Endothelial cell of umbilical vein (primary cell): ENCODE measurements at regions of chr9 and their contacts with region 1.

Region 1: GRCh38 chr9:88991066-88992034 is at the start of gene S1PR3:
- DNase-seq: peak; percentile 45
- H3K4me3 ChIP-seq: peak within 1 kb of the TSS; percentile 52 to 99 (median 96)
- H3K27ac ChIP-seq: peak within 1 kb of the TSS; percentile 58
- H3K4me1 ChIP-seq: peaks cover 37% of the 10 kb centered on the region
- H3K27me3 ChIP-seq: no peaks in the 10 kb centered on the region
- CTCF ChIP-seq: peak; percentile 5 to 9
- POLR2A ChIP-seq: peak; percentile 41
- total RNA-seq, gene S1PR3: 18.9 and 25.8 TPM in 2 replicates

Region 2: DNA sequence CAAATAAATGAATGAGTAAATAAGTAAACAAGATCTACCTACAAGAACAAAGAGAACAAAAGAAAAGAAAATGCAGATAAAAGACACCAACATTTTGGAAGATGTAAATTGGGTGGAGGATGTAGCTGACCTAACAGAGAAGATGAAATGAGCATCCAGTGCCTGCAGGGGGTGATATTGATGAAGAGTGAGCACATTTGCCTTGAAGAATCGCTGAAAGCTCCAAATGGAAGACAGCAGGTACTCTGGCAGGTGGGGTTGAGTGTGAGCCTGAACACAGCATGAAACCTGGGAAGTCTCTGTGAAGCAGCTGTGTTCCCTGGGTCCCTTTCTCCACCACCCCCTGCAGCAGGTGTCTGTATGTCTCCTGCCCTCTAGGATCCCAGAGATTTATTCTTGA is 330.7 kb before region 1 on chr9:
- CTCF ChIA-PET with region 1: interaction called, 24 read pairs
- POLR2A ChIA-PET with region 1: no interaction called
- dilution Hi-C with region 1: no loop called
- intact Hi-C with region 1: no loop called
- DNase-seq: peak; percentile 46
- H3K4me3 ChIP-seq: no peak overlapping the region
- H3K27ac ChIP-seq: no peak overlapping the region
- H3K4me1 ChIP-seq: no peaks in the 10 kb centered on the region
- H3K27me3 ChIP-seq: no peaks in the 10 kb centered on the region
- CTCF ChIP-seq: peak; percentile 36 to 50
- POLR2A ChIP-seq: no peak

Region 3: GRCh38 chr9:88775037-88775471 is 216.3 kb before region 1 on chr9:
- CTCF ChIA-PET with region 1: interaction called, 3 read pairs
- POLR2A ChIA-PET with region 1: interaction called, 4 read pairs
- dilution Hi-C with region 1: no loop called
- intact Hi-C with region 1: loop called (anchors 1 kb)
- DNase-seq: peak; percentile 80
- H3K4me3 ChIP-seq: no peak overlapping the region
- H3K27ac ChIP-seq: peak overlapping the region; percentile 88
- H3K4me1 ChIP-seq: peaks cover 52% of the 10 kb centered on the region
- H3K27me3 ChIP-seq: no peaks in the 10 kb centered on the region
- CTCF ChIP-seq: no peak
- POLR2A ChIP-seq: no peak

Region 4: GRCh38 chr9:88949425-88949824 is 41.9 kb before region 1 on chr9:
- CTCF ChIA-PET with region 1: interaction called, 3 read pairs
- POLR2A ChIA-PET with region 1: no interaction called
- dilution Hi-C with region 1: no loop called
- intact Hi-C with region 1: loop called (anchors 5 kb)
- DNase-seq: peak; percentile 81
- H3K4me3 ChIP-seq: no peak overlapping the region
- H3K27ac ChIP-seq: no peak overlapping the region
- H3K4me1 ChIP-seq: no peaks in the 10 kb centered on the region
- H3K27me3 ChIP-seq: peaks cover 0 to 2% of the 10 kb centered on the region in 2 experiments
- CTCF ChIP-seq: no peak
- POLR2A ChIP-seq: no peak

Region 5: GRCh38 chr9:88973281-88974152 is 17.8 kb before region 1 on chr9:
- CTCF ChIA-PET with region 1: no interaction called
- POLR2A ChIA-PET with region 1: no interaction called
- dilution Hi-C with region 1: no loop called
- intact Hi-C with region 1: no loop called
- DNase-seq: no peak
- H3K4me3 ChIP-seq: no peak overlapping the region
- H3K27ac ChIP-seq: no peak overlapping the region
- H3K4me1 ChIP-seq: no peaks in the 10 kb centered on the region
- H3K27me3 ChIP-seq: peaks cover 3 to 5% of the 10 kb centered on the region in 2 experiments
- CTCF ChIP-seq: no peak
- POLR2A ChIP-seq: no peak